ENCODE measurements at regions of chr1 and their contacts with region 1.

Region 1: GRCh38 chr1:231192620-231193163 is 30.8 kb downstream of the TRIM67 start:
- DNase-seq: peak; percentile 48 to 73
- ATAC-seq: peak; percentile 83 to 92 (median 90)
- H3K4me3 ChIP-seq: no peak overlapping the region
- H3K27ac ChIP-seq: no peak overlapping the region
- H3K4me1 ChIP-seq: peaks cover 0 to 12% (median 9%) of the 10 kb centered on the region in 9 donors
- H3K27me3 ChIP-seq: peaks cover 0 to 31% (median 12%) of the 10 kb centered on the region in 7 donors
- CTCF ChIP-seq: no peak

Region 2: DNA sequence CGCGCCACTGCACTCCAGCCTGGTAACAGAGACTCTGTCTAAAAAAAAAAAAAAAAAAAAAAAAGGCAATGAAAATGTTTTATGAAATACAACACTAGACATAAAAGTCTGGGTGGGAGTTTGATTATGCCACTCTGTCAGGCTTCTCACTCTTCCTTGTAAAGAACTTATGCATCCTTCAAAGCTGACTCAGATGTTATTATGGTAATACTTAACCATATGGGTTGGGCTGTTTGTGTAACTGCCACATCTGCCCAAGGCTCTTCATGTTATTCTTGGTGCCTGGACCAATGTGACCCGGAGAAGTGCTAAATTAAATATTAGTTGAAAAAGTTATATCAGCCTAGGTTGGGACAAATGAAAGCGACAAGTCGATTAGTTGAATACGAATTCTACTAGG is 176.5 kb before region 1 on chr1:
- intact Hi-C with region 1: loop called in 1 of 10 experiments (anchors 10 kb)
- DNase-seq: no peak
- ATAC-seq: no peak
- H3K4me3 ChIP-seq: no peak overlapping the region
- H3K27ac ChIP-seq: no peak overlapping the region
- H3K4me1 ChIP-seq: peaks cover 0 to 17% (median 7%) of the 10 kb centered on the region in 9 donors
- H3K27me3 ChIP-seq: no peaks in the 10 kb centered on the region
- CTCF ChIP-seq: no peak

Measured in heart right ventricle (tissue), 16 donors.